ENCODE measurements at regions of chr15 and their contacts with region 1.

Region 1: DNA sequence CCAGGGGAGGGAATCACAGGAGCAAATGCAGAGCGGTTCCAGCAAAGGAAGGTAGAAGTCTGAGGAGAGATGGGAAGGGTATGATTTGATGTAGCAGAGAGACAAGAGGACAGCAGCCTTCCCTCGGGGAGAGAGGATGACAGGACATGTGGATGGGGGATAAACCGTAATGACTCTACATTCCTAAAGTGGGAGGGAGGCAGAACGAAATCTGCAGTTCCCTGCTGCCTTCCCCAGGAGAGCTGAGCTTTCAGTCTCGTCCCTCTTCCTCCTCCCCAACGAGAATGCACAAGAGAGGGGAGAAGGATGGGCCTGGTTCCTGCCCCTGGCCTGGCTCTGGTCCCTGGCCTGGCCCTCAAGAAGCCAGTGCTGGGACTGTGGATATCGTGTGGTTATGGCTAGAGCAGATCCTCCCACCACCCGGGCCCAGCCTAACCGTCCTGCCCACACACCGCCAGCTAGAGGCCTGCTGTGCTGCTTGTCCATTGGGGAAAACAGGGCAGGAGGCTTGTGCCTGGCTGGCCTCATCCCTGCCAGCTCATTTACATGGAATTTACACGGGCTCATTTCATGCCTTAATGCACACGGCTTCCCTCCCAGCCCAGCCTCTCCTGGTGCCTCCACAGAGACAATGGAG is 26.6 kb downstream of the SEMA7A start:
- DNase-seq: no peak
- ATAC-seq: no peak
- H3K4me3 Mint-ChIP-seq: no peak overlapping the region
- H3K27ac Mint-ChIP-seq: peak overlapping the region; percentile 30
- H3K4me1 Mint-ChIP-seq: peaks cover 70% of the 10 kb centered on the region
- H3K27me3 Mint-ChIP-seq: no peaks in the 10 kb centered on the region
- CTCF ChIP-seq: no peak

Region 2: DNA sequence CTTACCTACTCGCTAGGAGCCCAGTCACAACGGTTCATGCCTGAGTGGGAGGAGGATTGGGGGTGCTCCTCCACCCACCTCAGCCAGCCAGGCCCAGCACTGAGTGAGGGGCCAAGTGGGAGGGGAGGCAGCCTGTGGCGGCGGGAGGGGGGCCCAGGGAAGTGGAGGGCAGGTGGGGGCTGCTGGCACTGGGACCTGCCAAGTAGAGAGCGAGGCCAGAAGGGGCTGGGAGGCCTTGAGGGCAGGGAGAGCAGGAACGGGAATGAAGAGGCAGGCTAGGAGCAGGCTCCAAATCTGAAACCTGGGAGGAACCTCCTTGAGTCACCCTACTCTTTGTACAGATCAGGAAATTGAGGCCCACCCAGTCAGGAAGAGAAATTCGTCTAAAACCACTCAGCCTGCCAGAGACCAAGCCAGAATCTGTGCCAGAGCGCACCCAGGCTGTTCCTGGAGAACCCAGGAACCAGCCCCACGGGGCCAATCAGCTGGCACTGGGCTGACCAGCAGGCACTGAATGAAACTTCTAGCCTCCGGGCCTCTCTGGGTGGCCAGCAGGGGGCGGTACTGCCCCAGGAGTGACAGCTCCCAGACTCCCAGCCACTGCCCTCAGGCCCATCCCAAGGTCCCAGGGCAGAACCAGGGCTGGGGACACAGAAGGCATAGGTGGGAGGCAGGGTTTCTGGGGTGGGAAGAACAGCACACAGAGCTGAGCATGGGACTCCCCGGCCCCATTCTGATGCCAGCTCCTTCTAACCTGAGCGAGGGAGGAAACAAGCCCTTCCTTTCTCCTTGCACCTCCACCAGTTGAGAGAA is 25.0 kb before region 1 on chr15:
- CTCF ChIA-PET with region 1: interaction called, 33 read pairs
- POLR2A ChIA-PET with region 1: interaction called, 563 read pairs
- intact Hi-C with region 1: loop called (anchors 1 kb)
- DNase-seq: peak; percentile 76
- ATAC-seq: no peak
- H3K4me3 Mint-ChIP-seq: no peak overlapping the region
- H3K27ac Mint-ChIP-seq: peak overlapping the region; percentile 97
- H3K4me1 Mint-ChIP-seq: peaks cover 70% of the 10 kb centered on the region
- H3K27me3 Mint-ChIP-seq: no peaks in the 10 kb centered on the region
- CTCF ChIP-seq: peak; percentile 67

Region 3: GRCh38 chr15:74396445-74397238 is 10.5 kb before region 1 on chr15:
- CTCF ChIA-PET with region 1: interaction called, 4 read pairs
- POLR2A ChIA-PET with region 1: interaction called, 50 read pairs
- intact Hi-C with region 1: loop called (anchors 1 kb)
- DNase-seq: peak; percentile 72
- ATAC-seq: peak; percentile 66
- H3K4me3 Mint-ChIP-seq: peak overlapping the region; percentile 80
- H3K27ac Mint-ChIP-seq: peak overlapping the region; percentile 99
- H3K4me1 Mint-ChIP-seq: peaks cover 100% of the 10 kb centered on the region
- H3K27me3 Mint-ChIP-seq: no peaks in the 10 kb centered on the region
- CTCF ChIP-seq: no peak

Region 4: GRCh38 chr15:74422650-74423430 is 15.7 kb after region 1 on chr15:
- CTCF ChIA-PET with region 1: interaction called, 4 read pairs
- POLR2A ChIA-PET with region 1: interaction called, 164 read pairs
- intact Hi-C with region 1: no loop called
- DNase-seq: no peak
- ATAC-seq: peak; percentile 32
- H3K4me3 Mint-ChIP-seq: peak overlapping the region; percentile 59
- H3K27ac Mint-ChIP-seq: peak overlapping the region; percentile 64
- H3K4me1 Mint-ChIP-seq: peaks cover 95% of the 10 kb centered on the region
- H3K27me3 Mint-ChIP-seq: no peaks in the 10 kb centered on the region
- CTCF ChIP-seq: no peak

Region 5: GRCh38 chr15:74433592-74434262 is 26.6 kb after region 1 on chr15 and contains the start of gene SEMA7A:
- CTCF ChIA-PET with region 1: interaction called, 21 read pairs
- POLR2A ChIA-PET with region 1: interaction called, 164 read pairs
- intact Hi-C with region 1: loop called (anchors 1 kb)
- DNase-seq: peak; percentile 83
- ATAC-seq: peak; percentile 80
- H3K4me3 Mint-ChIP-seq: peak within 1 kb of the TSS; percentile 96
- H3K27ac Mint-ChIP-seq: peak within 1 kb of the TSS; percentile 90
- H3K4me1 Mint-ChIP-seq: peaks cover 76% of the 10 kb centered on the region
- H3K27me3 Mint-ChIP-seq: no peaks in the 10 kb centered on the region
- CTCF ChIP-seq: no peak
- total RNA-seq, gene SEMA7A: 159 and 178 TPM in 2 replicates

Region 6: GRCh38 chr15:74438721-74439316 is 31.6 kb after region 1 on chr15:
- CTCF ChIA-PET with region 1: interaction called, 14 read pairs
- POLR2A ChIA-PET with region 1: interaction called, 164 read pairs
- intact Hi-C with region 1: loop called (anchors 1 kb)
- DNase-seq: peak; percentile 67
- ATAC-seq: peak; percentile 53
- H3K4me3 Mint-ChIP-seq: peak overlapping the region; percentile 28
- H3K27ac Mint-ChIP-seq: peak overlapping the region; percentile 73
- H3K4me1 Mint-ChIP-seq: peaks cover 40% of the 10 kb centered on the region
- H3K27me3 Mint-ChIP-seq: no peaks in the 10 kb centered on the region
- CTCF ChIP-seq: peak; percentile 54

Region 7: GRCh38 chr15:74453925-74454763 is 47.0 kb after region 1 on chr15:
- CTCF ChIA-PET with region 1: no interaction called
- POLR2A ChIA-PET with region 1: no interaction called
- intact Hi-C with region 1: no loop called
- DNase-seq: no peak
- ATAC-seq: no peak
- H3K4me3 Mint-ChIP-seq: no peak overlapping the region
- H3K27ac Mint-ChIP-seq: no peak overlapping the region
- H3K4me1 Mint-ChIP-seq: peaks cover 4% of the 10 kb centered on the region
- H3K27me3 Mint-ChIP-seq: no peaks in the 10 kb centered on the region
- CTCF ChIP-seq: no peak

Measured in activated B cell treated with CpG ODN at 0.5 μM for 24 hours (primary cell).